PC-9 (cell line): ENCODE measurements at regions of chr10 and their contacts with region 1.

Region 1: GRCh38 chr10:68434657-68435056 is 27.6 kb upstream of the RUFY2 start:
- DNase-seq: no peak
- H3K4me3 ChIP-seq: no peak overlapping the region
- H3K27ac ChIP-seq: no peak overlapping the region
- H3K4me1 ChIP-seq: no peaks in the 10 kb centered on the region
- H3K27me3 ChIP-seq: no peaks in the 10 kb centered on the region
- CTCF ChIP-seq: no peak

Region 2: DNA sequence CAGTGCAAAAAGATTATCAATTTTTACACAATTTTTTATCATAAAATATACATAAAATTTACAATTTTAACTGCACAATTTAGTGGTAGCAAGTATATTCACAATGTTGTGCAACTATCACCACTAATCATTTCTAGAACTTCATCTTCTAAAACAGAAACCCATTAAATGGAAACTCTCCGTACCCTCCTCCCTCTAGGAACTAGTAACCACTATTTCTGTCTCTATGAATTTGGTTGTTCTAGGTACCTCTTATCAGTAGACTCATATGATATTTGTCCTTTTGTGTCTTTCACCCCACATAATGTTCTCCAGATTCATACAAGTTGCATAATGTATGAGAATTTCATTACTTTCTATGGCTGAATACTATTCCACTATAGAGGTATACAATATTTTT is 433.1 kb before region 1 on chr10:
- CTCF ChIA-PET with region 1: no interaction called
- POLR2A ChIA-PET with region 1: interaction called, 10 read pairs
- intact Hi-C with region 1: no loop called
- DNase-seq: no peak
- H3K4me3 ChIP-seq: no peak overlapping the region
- H3K27ac ChIP-seq: no peak overlapping the region
- H3K4me1 ChIP-seq: no peaks in the 10 kb centered on the region
- H3K27me3 ChIP-seq: no peaks in the 10 kb centered on the region
- CTCF ChIP-seq: no peak